ENCODE measurements at regions of chr1 and their contacts with region 1.

Region 1: GRCh38 chr1:55081188-55081904 is 42.0 kb downstream of the PCSK9 start:
- DNase-seq: no peak
- H3K4me3 ChIP-seq: no peak overlapping the region
- H3K27ac ChIP-seq: no peak overlapping the region
- H3K4me1 ChIP-seq: no peaks in the 10 kb centered on the region
- H3K27me3 ChIP-seq: no peaks in the 10 kb centered on the region
- CTCF ChIP-seq: no peak

Region 2: DNA sequence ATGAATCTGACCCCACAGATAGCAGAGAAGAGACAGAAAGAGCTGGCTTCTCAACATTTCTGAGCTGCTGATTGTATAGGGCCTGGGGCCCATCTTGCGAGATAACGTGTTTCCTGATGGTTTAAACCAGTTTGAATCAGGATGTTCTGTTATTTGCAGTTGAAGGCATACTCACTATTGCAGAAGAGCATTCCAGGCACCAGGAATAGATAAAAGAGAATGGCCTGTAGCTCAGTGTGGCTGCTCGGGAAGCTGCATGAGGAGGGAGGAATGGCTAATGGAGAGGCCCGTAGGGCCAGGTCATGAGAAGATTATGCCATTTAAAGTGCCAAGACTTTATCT is 652.2 kb before region 1 on chr1:
- intact Hi-C with region 1: no loop called
- DNase-seq: no peak
- H3K4me3 ChIP-seq: no peak overlapping the region
- H3K27ac ChIP-seq: no peak overlapping the region
- H3K4me1 ChIP-seq: no peaks in the 10 kb centered on the region
- H3K27me3 ChIP-seq: no peaks in the 10 kb centered on the region
- CTCF ChIP-seq: no peak

Region 3: DNA sequence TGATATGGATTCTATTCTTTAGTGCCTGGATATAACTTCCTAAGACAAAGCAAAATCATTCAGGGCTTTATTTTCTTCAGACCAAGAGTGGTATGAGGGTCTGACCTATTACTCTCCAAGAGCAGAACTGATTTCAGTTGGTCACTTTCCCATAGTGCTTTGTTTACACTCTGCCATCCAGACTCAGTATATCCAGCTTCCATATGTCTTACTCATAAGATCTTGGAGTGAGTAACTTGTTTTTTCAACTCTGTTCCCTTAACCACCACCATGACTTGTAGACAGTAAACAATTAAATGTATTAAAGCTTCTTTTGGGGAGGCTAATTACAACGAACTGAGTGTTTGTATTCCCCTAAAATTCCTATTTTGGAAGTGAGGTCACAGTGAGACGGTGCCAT is 50.5 kb after region 1 on chr1:
- intact Hi-C with region 1: loop called (anchors 5 kb)
- DNase-seq: no peak
- H3K4me3 ChIP-seq: no peak overlapping the region
- H3K27ac ChIP-seq: no peak overlapping the region
- H3K4me1 ChIP-seq: no peaks in the 10 kb centered on the region
- H3K27me3 ChIP-seq: no peaks in the 10 kb centered on the region
- CTCF ChIP-seq: no peak

Region 4: GRCh38 chr1:55504306-55504731 is 423.0 kb after region 1 on chr1:
- intact Hi-C with region 1: no loop called
- DNase-seq: peak; percentile 89
- H3K4me3 ChIP-seq: no peak overlapping the region
- H3K27ac ChIP-seq: peak overlapping the region; percentile 62
- H3K4me1 ChIP-seq: peaks cover 17% of the 10 kb centered on the region
- H3K27me3 ChIP-seq: no peaks in the 10 kb centered on the region
- CTCF ChIP-seq: no peak